Naive thymus-derived CD4-positive, alpha-beta T cell (primary cell): ENCODE measurements at regions of chr6 and their contacts with region 1.

Region 1: DNA sequence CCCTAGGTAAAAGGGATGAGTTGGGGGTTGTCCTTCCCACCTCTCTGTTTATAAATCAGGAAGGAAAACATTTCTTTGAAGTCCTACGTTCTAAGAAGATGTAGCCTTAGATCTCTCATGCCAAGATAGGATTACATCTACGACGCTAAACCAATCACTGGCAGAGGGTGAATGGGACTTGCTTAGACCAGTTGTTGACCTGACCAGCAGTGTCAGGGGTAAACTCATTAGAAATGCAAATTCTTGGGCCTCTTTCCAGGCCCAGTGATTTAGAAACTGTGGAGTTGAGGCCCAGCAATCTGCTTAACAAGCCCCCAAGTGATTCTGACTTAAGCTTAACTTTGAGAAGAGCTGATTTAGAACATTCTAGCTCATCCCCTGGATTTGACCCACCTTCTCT is 147.1 kb upstream of the THEMIS start:
- DNase-seq: no peak
- ATAC-seq: no peak
- H3K4me3 ChIP-seq: no peak overlapping the region
- H3K4me3 Mint-ChIP-seq: no peak overlapping the region
- H3K27ac ChIP-seq: no peak overlapping the region
- H3K27ac Mint-ChIP-seq: no peak overlapping the region
- H3K4me1 ChIP-seq: no peaks in the 10 kb centered on the region
- H3K4me1 Mint-ChIP-seq: peaks cover 0 to 6% (median 0%) of the 10 kb centered on the region in 7 donors
- H3K27me3 ChIP-seq: no peaks in the 10 kb centered on the region
- H3K27me3 Mint-ChIP-seq: no peaks in the 10 kb centered on the region

Region 2: DNA sequence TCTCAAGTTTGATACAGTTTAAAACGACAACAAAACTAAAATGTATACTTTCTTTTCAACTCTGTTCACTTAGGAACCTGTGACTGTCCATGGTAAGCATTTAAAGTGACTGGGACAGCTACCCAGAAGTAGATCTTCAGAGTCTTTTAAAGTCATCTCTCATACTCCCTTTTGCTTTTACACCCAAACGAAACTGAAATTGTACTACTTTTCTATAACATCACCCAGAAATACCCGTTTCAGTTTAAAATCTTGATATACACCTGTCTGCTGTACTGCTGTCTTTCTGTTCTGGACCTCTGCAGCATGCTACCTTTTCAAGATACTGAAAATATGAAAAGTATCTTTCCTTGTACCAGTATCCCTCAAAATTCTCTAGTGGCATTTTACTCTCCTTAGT is 23.2 kb after region 1 on chr6:
- CTCF ChIA-PET with region 1: no interaction called
- POLR2A ChIA-PET with region 1: no interaction called
- intact Hi-C with region 1: loop called in 1 of 2 experiments (anchors 2 kb)
- DNase-seq: no peak
- ATAC-seq: no peak
- H3K4me3 ChIP-seq: no peak overlapping the region
- H3K4me3 Mint-ChIP-seq: no peak overlapping the region
- H3K27ac ChIP-seq: no peak overlapping the region
- H3K27ac Mint-ChIP-seq: no peak overlapping the region
- H3K4me1 ChIP-seq: no peaks in the 10 kb centered on the region
- H3K4me1 Mint-ChIP-seq: peaks cover 0 to 4% (median 0%) of the 10 kb centered on the region in 7 donors
- H3K27me3 ChIP-seq: no peaks in the 10 kb centered on the region
- H3K27me3 Mint-ChIP-seq: peaks cover 0 to 3% (median 0%) of the 10 kb centered on the region in 5 donors

Region 3: DNA sequence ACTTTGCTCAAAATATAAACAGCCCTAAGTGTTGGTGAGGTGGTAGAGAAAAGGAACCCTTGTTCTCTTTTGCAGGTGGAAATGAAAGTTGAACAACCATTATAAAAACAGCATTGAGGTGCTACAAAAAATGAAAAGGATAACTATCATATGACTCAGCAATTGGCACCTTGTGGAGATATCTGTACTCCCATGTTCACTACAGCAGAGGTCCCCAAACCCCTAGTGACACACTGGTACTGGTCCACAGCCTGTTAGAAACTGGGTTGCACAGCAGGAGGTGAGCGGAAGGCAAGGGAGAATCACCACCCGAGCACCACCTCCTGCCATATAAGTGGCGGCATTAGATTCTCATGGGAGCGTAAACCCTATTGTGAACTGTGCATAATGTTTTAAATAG is 120.3 kb after region 1 on chr6:
- CTCF ChIA-PET with region 1: no interaction called
- POLR2A ChIA-PET with region 1: no interaction called
- intact Hi-C with region 1: no loop called
- DNase-seq: no peak
- ATAC-seq: no peak
- H3K4me3 ChIP-seq: no peak overlapping the region
- H3K4me3 Mint-ChIP-seq: no peak overlapping the region
- H3K27ac ChIP-seq: no peak overlapping the region
- H3K27ac Mint-ChIP-seq: no peak overlapping the region
- H3K4me1 ChIP-seq: no peaks in the 10 kb centered on the region
- H3K4me1 Mint-ChIP-seq: peaks cover 0 to 7% (median 0%) of the 10 kb centered on the region in 7 donors
- H3K27me3 ChIP-seq: no peaks in the 10 kb centered on the region
- H3K27me3 Mint-ChIP-seq: peaks cover 0 to 5% (median 0%) of the 10 kb centered on the region in 5 donors